ENCODE measurements at regions of chrX and their contacts with region 1.

Region 1: DNA sequence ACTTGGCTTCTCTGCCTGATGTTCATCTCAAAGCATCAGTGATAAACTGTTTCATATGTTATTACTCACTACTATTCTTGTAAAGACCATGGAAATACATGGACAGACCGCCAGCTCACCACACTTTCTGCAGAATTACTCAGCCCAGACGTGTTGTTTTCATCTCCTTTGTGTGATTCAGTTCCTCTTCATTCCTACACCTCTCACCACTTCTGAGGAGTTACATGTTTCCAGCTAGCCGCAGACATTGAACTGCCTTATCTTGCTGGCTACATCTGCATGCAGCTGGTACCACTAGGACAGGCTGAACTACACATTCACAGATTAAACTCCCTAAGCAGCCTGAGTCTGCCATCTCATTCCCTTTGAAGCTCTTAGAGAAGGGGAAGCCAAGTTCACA is 443.2 kb upstream of the FGF16 start:
- DNase-seq: peak; percentile 72
- H3K4me3 Mint-ChIP-seq: no peak overlapping the region
- H3K27ac Mint-ChIP-seq: peak overlapping the region; percentile 83
- H3K4me1 Mint-ChIP-seq: peaks cover 13% of the 10 kb centered on the region
- H3K27me3 Mint-ChIP-seq: no peaks in the 10 kb centered on the region

Region 2: GRCh38 chrX:76971393-76972376 is 32.3 kb before region 1 on chrX:
- intact Hi-C with region 1: loop called (anchors 2 kb)
- DNase-seq: no peak
- H3K4me3 Mint-ChIP-seq: no peak overlapping the region
- H3K27ac Mint-ChIP-seq: no peak overlapping the region
- H3K4me1 Mint-ChIP-seq: no peaks in the 10 kb centered on the region
- H3K27me3 Mint-ChIP-seq: no peaks in the 10 kb centered on the region

Measured in activated CD4-positive, alpha-beta T cell treated with anti-CD3 and anti-CD28 coated beads, Interleukin-2, amount 10 ng/mL, durations not matched to agents 24 days and 14 days (primary cell).